Cardiac septum (tissue), 1 donor: ENCODE measurements at regions of chr13 and their contacts with region 1.

Region 1: GRCh38 chr13:71290963-71291841 is 575.8 kb downstream of the DACH1 start:
- DNase-seq: no peak

Region 2: DNA sequence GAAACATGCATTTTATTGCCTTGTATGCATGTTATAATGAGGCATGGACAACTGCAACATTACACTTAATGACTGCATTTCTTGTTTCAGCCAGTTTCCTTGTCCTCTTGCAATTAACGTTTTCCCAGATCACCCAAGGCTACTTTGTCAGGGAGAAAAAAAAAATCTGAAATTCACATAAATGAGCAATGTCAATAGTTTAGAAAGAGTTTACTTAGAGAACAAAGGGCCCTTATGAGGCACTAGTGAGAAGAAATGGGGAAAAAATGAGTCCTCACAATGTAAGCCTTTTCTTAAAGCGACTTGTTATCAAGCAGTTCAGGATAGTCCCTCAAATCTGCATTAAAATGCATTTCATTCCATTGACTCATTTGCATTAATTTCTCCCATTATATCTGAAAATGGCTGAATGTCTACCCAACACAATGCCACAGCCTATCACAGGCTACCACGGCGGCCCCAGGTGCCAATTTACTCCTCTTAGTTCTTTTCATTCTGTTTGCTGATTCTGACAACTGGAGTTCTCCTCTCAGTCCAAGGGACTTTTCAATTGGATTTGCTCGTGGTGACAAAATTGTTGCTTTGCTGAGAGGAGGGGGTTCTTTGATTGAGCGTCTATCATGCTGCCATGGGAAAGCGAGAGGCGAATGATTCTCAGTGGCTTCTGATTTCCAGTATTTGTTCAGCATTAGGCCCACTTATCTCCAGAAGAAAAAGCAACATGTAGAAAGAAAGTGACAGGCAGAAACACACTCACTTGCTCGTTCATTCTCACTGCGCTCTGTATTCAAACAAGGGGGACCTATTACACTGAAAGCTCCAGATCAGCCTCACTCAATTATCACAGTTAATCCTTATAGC is 468.7 kb after region 1 on chr13:
- intact Hi-C with region 1: loop called (anchors 5 kb)
- DNase-seq: no peak